Ascending aorta (tissue), 2 donors: ENCODE measurements at regions of chr10 and their contacts with region 1.

Region 1: GRCh38 chr10:109899359-109900331 is 23.7 kb downstream of the XPNPEP1 start:
- DNase-seq: no peak
- H3K4me3 ChIP-seq: no peak overlapping the region
- H3K27ac ChIP-seq: peak overlapping the region; percentile 82 to 94
- H3K4me1 ChIP-seq: peaks cover 17 to 60% of the 10 kb centered on the region in 2 donors
- H3K27me3 ChIP-seq: no peaks in the 10 kb centered on the region
- CTCF ChIP-seq: no peak

Region 2: GRCh38 chr10:109593682-109594081 is 306.0 kb before region 1 on chr10:
- intact Hi-C with region 1: no loop called
- DNase-seq: no peak
- H3K4me3 ChIP-seq: no peak overlapping the region
- H3K27ac ChIP-seq: no peak overlapping the region
- H3K4me1 ChIP-seq: no peaks in the 10 kb centered on the region
- H3K27me3 ChIP-seq: no peaks in the 10 kb centered on the region
- CTCF ChIP-seq: no peak

Region 3: GRCh38 chr10:109912335-109913281 is 13.0 kb after region 1 on chr10:
- intact Hi-C with region 1: loop called (anchors 2 kb)
- DNase-seq: no peak
- H3K4me3 ChIP-seq: no peak overlapping the region
- H3K27ac ChIP-seq: peak overlapping the region; percentile 54 to 63
- H3K4me1 ChIP-seq: peaks cover 4 to 26% of the 10 kb centered on the region in 2 donors
- H3K27me3 ChIP-seq: no peaks in the 10 kb centered on the region
- CTCF ChIP-seq: no peak

Region 4: DNA sequence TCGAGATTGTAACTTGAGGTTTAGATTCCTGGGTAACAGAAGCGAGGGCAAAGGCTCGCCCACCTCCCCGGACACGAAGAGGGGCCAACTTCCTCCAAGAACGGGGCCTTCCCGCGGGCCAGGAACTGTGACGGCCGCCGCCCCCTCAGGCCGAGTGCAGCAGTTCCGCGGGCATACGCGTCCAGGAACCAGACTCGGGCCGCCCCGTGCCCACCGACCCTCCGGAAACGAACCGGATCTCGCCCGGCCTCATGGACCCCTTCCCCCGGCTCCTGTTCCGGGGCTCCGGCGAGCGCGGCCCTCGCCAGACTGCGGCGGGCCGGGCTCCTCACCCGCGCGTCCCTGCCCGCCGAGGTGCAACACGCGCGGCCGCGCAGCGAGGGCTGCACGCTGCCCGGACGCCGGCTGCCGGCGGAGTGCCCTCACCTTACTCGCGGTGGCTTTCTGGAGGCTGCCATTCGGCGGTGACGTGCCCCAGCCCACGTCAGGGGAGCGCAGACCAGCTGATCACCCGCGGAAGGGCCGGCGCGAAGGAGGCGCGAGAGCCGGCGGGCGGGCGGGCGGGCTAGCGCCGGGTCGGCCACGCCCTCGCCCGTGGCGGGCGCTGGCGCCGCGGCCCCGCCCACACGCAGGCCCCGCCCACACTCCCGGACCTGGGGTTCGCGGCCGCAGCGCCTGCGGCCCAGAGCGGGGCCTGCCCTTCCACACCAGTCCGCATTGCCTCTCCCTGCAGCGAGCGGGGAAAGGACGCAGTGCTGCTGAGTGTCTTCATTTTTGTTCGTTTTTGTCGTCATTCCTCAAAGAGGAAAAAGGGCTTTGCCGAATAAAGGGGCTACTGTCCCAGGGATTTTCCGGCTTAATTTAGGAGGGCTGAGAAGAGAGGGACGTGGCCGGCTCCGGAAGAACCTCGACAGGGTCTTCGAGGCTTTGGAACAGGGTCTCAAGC is 23.6 kb after region 1 on chr10 and contains the start of gene XPNPEP1:
- intact Hi-C with region 1: loop called (anchors 2 kb)
- DNase-seq: peak; percentile 65 to 94
- H3K4me3 ChIP-seq: peak within 1 kb of the TSS; percentile 94 to 97
- H3K27ac ChIP-seq: peak within 1 kb of the TSS; percentile 93 to 98
- H3K4me1 ChIP-seq: peaks cover 3 to 10% of the 10 kb centered on the region in 2 donors
- H3K27me3 ChIP-seq: no peaks in the 10 kb centered on the region
- CTCF ChIP-seq: peak in 2 of 3 experiments; percentile 5 to 12
- total RNA-seq, gene XPNPEP1: 212 TPM